CD4-positive, alpha-beta T cell (primary cell): ENCODE measurements at regions of chr10 and their contacts with region 1.

Region 1: GRCh38 chr10:17228091-17228940 is at the start of gene VIM:
- DNase-seq: peak; percentile 66 to 95 (median 86)
- ATAC-seq: peak; percentile 26
- H3K4me3 ChIP-seq: peak within 1 kb of the TSS; percentile 94
- H3K4me3 Mint-ChIP-seq: peak within 1 kb of the TSS; percentile 86
- H3K27ac ChIP-seq: peak within 1 kb of the TSS; percentile 93 to 100
- H3K27ac Mint-ChIP-seq: peak within 1 kb of the TSS; percentile 98
- H3K4me1 ChIP-seq: peaks cover 42% of the 10 kb centered on the region
- H3K4me1 Mint-ChIP-seq: peaks cover 61% of the 10 kb centered on the region
- H3K27me3 ChIP-seq: no peaks in the 10 kb centered on the region
- H3K27me3 Mint-ChIP-seq: no peaks in the 10 kb centered on the region
- CTCF ChIP-seq: no peak
- total RNA-seq, gene VIM: 1,576 to 1,603 TPM

Region 2: GRCh38 chr10:16909961-16910792 is 318.1 kb before region 1 on chr10:
- CTCF ChIA-PET with region 1: no interaction called
- POLR2A ChIA-PET with region 1: no interaction called
- intact Hi-C with region 1: loop called (anchors 5 kb)
- DNase-seq: peak in 1 of 14 experiments; percentile 7
- ATAC-seq: no peak
- H3K4me3 ChIP-seq: no peak overlapping the region
- H3K4me3 Mint-ChIP-seq: no peak overlapping the region
- H3K27ac ChIP-seq: no peak overlapping the region
- H3K27ac Mint-ChIP-seq: no peak overlapping the region
- H3K4me1 ChIP-seq: no peaks in the 10 kb centered on the region
- H3K4me1 Mint-ChIP-seq: no peaks in the 10 kb centered on the region
- H3K27me3 ChIP-seq: no peaks in the 10 kb centered on the region
- H3K27me3 Mint-ChIP-seq: no peaks in the 10 kb centered on the region
- CTCF ChIP-seq: no peak

Region 3: GRCh38 chr10:17001961-17002749 is 226.2 kb before region 1 on chr10:
- CTCF ChIA-PET with region 1: interaction called, 4 read pairs
- POLR2A ChIA-PET with region 1: interaction called, 6 read pairs
- intact Hi-C with region 1: loop called in 1 of 2 experiments (anchors 1 kb)
- DNase-seq: peak in 4 of 14 experiments; percentile 38 to 92 (median 70)
- ATAC-seq: peak; percentile 40
- H3K4me3 ChIP-seq: no peak overlapping the region
- H3K4me3 Mint-ChIP-seq: peak overlapping the region; percentile 59
- H3K27ac ChIP-seq: peak overlapping the region; percentile 21 to 58
- H3K27ac Mint-ChIP-seq: peak overlapping the region; percentile 95
- H3K4me1 ChIP-seq: peaks cover 28% of the 10 kb centered on the region
- H3K4me1 Mint-ChIP-seq: peaks cover 66% of the 10 kb centered on the region
- H3K27me3 ChIP-seq: no peaks in the 10 kb centered on the region
- H3K27me3 Mint-ChIP-seq: no peaks in the 10 kb centered on the region
- CTCF ChIP-seq: no peak

Region 4: DNA sequence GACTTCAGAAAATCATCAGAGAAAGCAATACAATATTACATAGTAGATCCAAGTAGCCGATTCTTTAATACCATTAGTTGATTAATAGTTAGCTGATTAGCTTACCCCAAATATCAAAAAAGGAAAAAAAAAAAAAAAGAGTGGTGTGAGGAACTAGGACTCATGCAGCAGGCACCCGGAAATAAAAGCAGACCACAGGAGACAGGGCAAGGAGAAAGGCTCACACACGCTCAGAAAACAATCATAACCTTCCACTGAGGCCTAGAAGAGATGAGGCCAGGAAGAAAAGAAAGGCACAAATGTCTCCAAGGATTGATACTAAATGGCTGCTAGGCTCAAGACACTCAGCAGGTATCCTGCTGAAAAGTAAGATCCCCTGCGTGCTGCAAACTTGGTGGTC is 52.8 kb before region 1 on chr10:
- CTCF ChIA-PET with region 1: interaction called, 7 read pairs
- POLR2A ChIA-PET with region 1: interaction called, 5 read pairs
- intact Hi-C with region 1: loop called in 1 of 2 experiments (anchors 10 kb)
- DNase-seq: peak in 4 of 14 experiments; percentile 12 to 43 (median 18)
- ATAC-seq: peak; percentile 43
- H3K4me3 ChIP-seq: no peak overlapping the region
- H3K4me3 Mint-ChIP-seq: peak overlapping the region; percentile 82
- H3K27ac ChIP-seq: no peak overlapping the region
- H3K27ac Mint-ChIP-seq: peak overlapping the region; percentile 85
- H3K4me1 ChIP-seq: peaks cover 3% of the 10 kb centered on the region
- H3K4me1 Mint-ChIP-seq: peaks cover 23% of the 10 kb centered on the region
- H3K27me3 ChIP-seq: no peaks in the 10 kb centered on the region
- H3K27me3 Mint-ChIP-seq: no peaks in the 10 kb centered on the region
- CTCF ChIP-seq: no peak

Region 5: DNA sequence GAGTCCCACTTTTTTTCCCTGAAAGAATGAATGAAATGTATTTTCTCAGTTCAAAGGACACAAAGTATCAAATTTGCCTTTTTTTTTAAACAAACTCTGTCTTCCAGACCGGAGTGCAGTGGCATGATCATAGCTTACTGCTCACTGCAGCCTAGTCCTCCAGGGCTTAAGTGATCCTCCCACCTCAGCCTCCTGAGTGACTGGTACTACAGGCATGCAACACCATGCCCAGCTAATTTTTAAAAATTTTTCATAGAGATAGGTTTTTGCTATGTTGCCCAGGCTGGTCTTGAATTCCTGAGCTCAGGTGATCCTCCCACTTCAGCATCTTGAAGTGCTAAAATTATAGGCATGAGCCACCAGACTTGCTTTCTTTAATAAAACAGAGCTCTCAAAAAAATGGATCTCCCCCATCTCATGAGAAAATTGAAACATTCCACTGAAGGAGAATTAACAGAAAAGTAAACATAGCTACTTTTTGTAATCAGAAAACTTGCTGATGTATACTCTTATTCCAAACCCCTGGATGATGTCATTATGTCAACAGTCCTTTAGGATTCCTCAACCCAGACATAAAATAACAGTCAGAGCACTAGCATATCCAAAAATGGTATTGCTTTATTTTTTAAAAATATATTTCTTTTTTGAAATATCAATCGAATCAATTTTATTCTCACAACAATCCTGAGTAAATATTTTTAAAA is 14.5 kb before region 1 on chr10:
- CTCF ChIA-PET with region 1: interaction called, 10 read pairs
- POLR2A ChIA-PET with region 1: interaction called, 16 read pairs
- intact Hi-C with region 1: no loop called
- DNase-seq: no peak
- ATAC-seq: no peak
- H3K4me3 ChIP-seq: no peak overlapping the region
- H3K4me3 Mint-ChIP-seq: no peak overlapping the region
- H3K27ac ChIP-seq: no peak overlapping the region
- H3K27ac Mint-ChIP-seq: no peak overlapping the region
- H3K4me1 ChIP-seq: peaks cover 8% of the 10 kb centered on the region
- H3K4me1 Mint-ChIP-seq: peaks cover 20% of the 10 kb centered on the region
- H3K27me3 ChIP-seq: no peaks in the 10 kb centered on the region
- H3K27me3 Mint-ChIP-seq: no peaks in the 10 kb centered on the region
- CTCF ChIP-seq: no peak

Region 6: DNA sequence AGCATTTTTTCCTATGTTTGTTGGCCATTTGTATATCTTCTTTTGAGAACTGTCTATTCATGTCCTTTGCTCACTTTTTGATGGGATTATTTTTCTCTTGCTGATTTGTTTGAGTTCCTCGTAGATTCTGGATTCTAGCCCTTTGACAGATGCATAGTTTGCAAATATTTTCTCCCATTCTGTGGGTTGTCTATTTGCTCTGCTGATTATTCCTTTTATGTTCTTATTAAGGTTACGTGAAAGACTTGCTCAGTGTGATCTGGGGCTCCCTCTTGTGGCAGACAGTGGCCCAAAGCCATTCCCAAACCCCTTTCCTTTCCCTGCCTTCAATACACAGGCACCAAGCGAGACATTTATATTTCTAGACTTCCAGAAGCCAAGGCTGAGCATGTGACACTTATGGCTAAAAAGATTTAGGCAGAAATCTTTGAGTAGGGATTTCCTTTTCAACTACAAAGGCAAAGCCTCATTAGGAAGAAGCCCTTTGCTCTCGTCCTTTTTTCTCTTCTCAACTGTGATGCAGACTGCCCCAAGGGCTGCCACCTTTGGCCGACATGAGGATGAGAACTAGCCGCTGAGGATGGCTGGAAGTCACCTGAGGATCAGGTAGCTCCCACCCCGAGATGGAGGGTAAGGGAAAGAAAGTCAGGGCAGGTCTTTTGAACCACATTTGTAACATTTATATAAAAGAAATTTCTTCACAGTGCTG is 202.5 kb after region 1 on chr10:
- CTCF ChIA-PET with region 1: interaction called, 3 read pairs
- POLR2A ChIA-PET with region 1: interaction called, 25 read pairs
- intact Hi-C with region 1: no loop called
- DNase-seq: peak; percentile 48 to 87 (median 64)
- ATAC-seq: no peak
- H3K4me3 ChIP-seq: no peak overlapping the region
- H3K4me3 Mint-ChIP-seq: peak overlapping the region; percentile 76
- H3K27ac ChIP-seq: no peak overlapping the region
- H3K27ac Mint-ChIP-seq: peak overlapping the region; percentile 93
- H3K4me1 ChIP-seq: peaks cover 46% of the 10 kb centered on the region
- H3K4me1 Mint-ChIP-seq: peaks cover 52% of the 10 kb centered on the region
- H3K27me3 ChIP-seq: no peaks in the 10 kb centered on the region
- H3K27me3 Mint-ChIP-seq: peaks cover 4% of the 10 kb centered on the region
- CTCF ChIP-seq: peak; percentile 98

Region 7: DNA sequence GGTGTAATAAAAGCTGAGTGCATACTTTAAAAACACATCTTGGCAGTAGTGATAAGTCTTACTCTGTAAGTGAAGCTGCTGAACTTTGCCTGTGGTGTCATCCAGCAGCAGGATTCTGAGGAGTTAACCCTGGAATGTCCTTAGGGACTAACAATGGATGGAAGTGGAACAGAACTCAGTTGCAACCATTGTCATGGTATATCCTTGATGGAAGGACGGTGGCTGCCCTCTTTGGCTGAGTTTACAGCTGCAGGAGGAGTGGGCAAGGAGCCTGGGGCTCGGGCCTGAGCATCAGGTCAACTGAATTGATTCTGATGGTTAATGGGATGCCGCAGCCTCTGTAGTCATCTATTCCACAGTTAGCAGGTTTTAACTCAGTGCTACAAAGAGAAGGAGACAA is 637.0 kb after region 1 on chr10:
- CTCF ChIA-PET with region 1: no interaction called
- POLR2A ChIA-PET with region 1: no interaction called
- intact Hi-C with region 1: no loop called
- DNase-seq: no peak
- ATAC-seq: no peak
- H3K4me3 ChIP-seq: no peak overlapping the region
- H3K4me3 Mint-ChIP-seq: no peak overlapping the region
- H3K27ac ChIP-seq: no peak overlapping the region
- H3K27ac Mint-ChIP-seq: no peak overlapping the region
- H3K4me1 ChIP-seq: no peaks in the 10 kb centered on the region
- H3K4me1 Mint-ChIP-seq: peaks cover under 1% of the 10 kb centered on the region
- H3K27me3 ChIP-seq: no peaks in the 10 kb centered on the region
- H3K27me3 Mint-ChIP-seq: no peaks in the 10 kb centered on the region
- CTCF ChIP-seq: no peak

Region 8: GRCh38 chr10:19003341-19003740 is 1775.0 kb after region 1 on chr10:
- CTCF ChIA-PET with region 1: no interaction called
- POLR2A ChIA-PET with region 1: no interaction called
- intact Hi-C with region 1: no loop called
- DNase-seq: no peak
- ATAC-seq: no peak
- H3K4me3 ChIP-seq: no peak overlapping the region
- H3K4me3 Mint-ChIP-seq: no peak overlapping the region
- H3K27ac ChIP-seq: no peak overlapping the region
- H3K27ac Mint-ChIP-seq: no peak overlapping the region
- H3K4me1 ChIP-seq: no peaks in the 10 kb centered on the region
- H3K4me1 Mint-ChIP-seq: no peaks in the 10 kb centered on the region
- H3K27me3 ChIP-seq: no peaks in the 10 kb centered on the region
- H3K27me3 Mint-ChIP-seq: no peaks in the 10 kb centered on the region
- CTCF ChIP-seq: no peak